CD4-positive, alpha-beta memory T cell (primary cell): ENCODE measurements at regions of chr1 and their contacts with region 1.

Region 1: GRCh38 chr1:236795035-236795756 is at the start of gene MTR:
- DNase-seq: peak; percentile 95 to 98 (median 95)
- H3K4me3 ChIP-seq: peak within 1 kb of the TSS; percentile 83 to 97
- H3K4me3 Mint-ChIP-seq: peak within 1 kb of the TSS; percentile 92 to 98 (median 96)
- H3K27ac ChIP-seq: peak within 1 kb of the TSS; percentile 99
- H3K27ac Mint-ChIP-seq: peak within 1 kb of the TSS; percentile 95 to 99 (median 98)
- H3K4me1 ChIP-seq: peaks cover 39% of the 10 kb centered on the region
- H3K4me1 Mint-ChIP-seq: peaks cover 25 to 49% (median 31%) of the 10 kb centered on the region in 4 donors
- H3K27me3 ChIP-seq: no peaks in the 10 kb centered on the region
- H3K27me3 Mint-ChIP-seq: peaks cover 1 to 5% of the 10 kb centered on the region in 2 donors
- total RNA-seq, gene MTR: 68.4 to 71.0 TPM

Region 2: GRCh38 chr1:236416165-236416564 is 379.0 kb before region 1 on chr1:
- CTCF ChIA-PET with region 1: no interaction called
- POLR2A ChIA-PET with region 1: no interaction called
- intact Hi-C with region 1: loop called (anchors 10 kb)
- DNase-seq: peak; percentile 73 to 86 (median 82)
- H3K4me3 ChIP-seq: peak overlapping the region; percentile 45 to 49
- H3K4me3 Mint-ChIP-seq: peak overlapping the region; percentile 63 to 89 (median 80)
- H3K27ac ChIP-seq: peak overlapping the region; percentile 83
- H3K27ac Mint-ChIP-seq: peak overlapping the region; percentile 88 to 99 (median 97)
- H3K4me1 ChIP-seq: peaks cover 25% of the 10 kb centered on the region
- H3K4me1 Mint-ChIP-seq: peaks cover 18 to 27% (median 25%) of the 10 kb centered on the region in 4 donors
- H3K27me3 ChIP-seq: no peaks in the 10 kb centered on the region
- H3K27me3 Mint-ChIP-seq: no peaks in the 10 kb centered on the region

Region 3: GRCh38 chr1:236523701-236524141 is 271.5 kb before region 1 on chr1 and contains the start of gene LGALS8:
- CTCF ChIA-PET with region 1: no interaction called
- POLR2A ChIA-PET with region 1: interaction called, 4 read pairs
- intact Hi-C with region 1: loop called (anchors 5 kb)
- DNase-seq: peak; percentile 80 to 88 (median 84)
- H3K4me3 ChIP-seq: peak within 1 kb of the TSS; percentile 87 to 96
- H3K4me3 Mint-ChIP-seq: peak within 1 kb of the TSS; percentile 94 to 100 (median 99)
- H3K27ac ChIP-seq: peak within 1 kb of the TSS; percentile 94
- H3K27ac Mint-ChIP-seq: peak within 1 kb of the TSS; percentile 91 to 99 (median 99)
- H3K4me1 ChIP-seq: peaks cover 22% of the 10 kb centered on the region
- H3K4me1 Mint-ChIP-seq: peaks cover 19 to 63% (median 35%) of the 10 kb centered on the region in 4 donors
- H3K27me3 ChIP-seq: no peaks in the 10 kb centered on the region
- H3K27me3 Mint-ChIP-seq: no peaks in the 10 kb centered on the region
- total RNA-seq, gene LGALS8: 193 to 196 TPM

Region 4: DNA sequence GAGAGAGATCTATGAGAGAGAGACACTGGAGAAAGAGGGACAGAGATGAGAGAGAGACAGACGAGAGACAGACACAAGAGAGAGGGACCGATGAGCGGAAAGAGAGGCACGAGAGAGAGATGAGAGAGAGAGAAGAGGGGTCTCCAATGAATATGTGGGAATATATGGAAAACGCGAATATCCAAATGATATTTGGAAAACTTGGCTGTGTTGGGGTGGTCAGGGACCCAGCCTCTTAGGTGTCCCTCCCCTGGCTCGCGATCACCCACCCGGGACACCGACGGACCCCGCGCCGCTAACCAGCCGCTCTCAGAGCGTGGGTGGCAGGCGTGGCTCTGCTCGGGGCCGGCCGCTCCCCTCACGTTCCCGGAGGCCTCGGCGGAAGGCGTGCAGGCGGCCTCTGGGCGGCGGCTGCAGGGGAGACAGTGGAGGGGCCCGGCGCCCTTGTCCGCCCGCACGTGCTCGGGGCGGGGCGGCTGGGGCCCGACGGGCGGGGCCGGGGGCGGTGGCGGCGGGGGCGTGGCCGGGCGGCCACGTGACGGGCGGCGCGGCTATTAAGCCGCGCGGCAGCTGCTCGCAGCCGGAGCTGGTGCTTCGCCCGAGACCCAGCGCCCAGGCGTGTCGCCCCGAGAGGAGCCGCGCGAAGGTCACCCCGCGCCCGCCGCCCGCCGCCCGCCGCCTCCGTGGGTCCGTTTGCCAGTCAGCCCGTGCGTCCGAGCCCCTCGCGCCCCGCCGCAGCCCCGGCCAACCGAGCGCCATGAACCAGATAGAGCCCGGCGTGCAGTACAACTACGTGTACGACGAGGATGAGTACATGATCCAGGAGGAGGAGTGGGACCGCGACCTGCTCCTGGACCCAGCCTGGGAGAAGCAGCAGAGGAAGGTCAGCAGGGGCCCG is 109.0 kb before region 1 on chr1 and contains the start of gene ACTN2:
- CTCF ChIA-PET with region 1: no interaction called
- POLR2A ChIA-PET with region 1: no interaction called
- intact Hi-C with region 1: loop called (anchors 10 kb)
- DNase-seq: peak; percentile 28 to 43 (median 36)
- H3K4me3 ChIP-seq: peak within 1 kb of the TSS; percentile 11 to 38
- H3K4me3 Mint-ChIP-seq: peak within 1 kb of the TSS; percentile 71 to 88 (median 80)
- H3K27ac ChIP-seq: no peak within 1 kb of the TSS
- H3K27ac Mint-ChIP-seq: peak within 1 kb of the TSS in 6 of 7 donors; percentile 12 to 90 (median 42)
- H3K4me1 ChIP-seq: peaks cover 11% of the 10 kb centered on the region
- H3K4me1 Mint-ChIP-seq: peaks cover 13 to 23% (median 18%) of the 10 kb centered on the region in 4 donors
- H3K27me3 ChIP-seq: peaks cover 5% of the 10 kb centered on the region
- H3K27me3 Mint-ChIP-seq: peaks cover 11 to 16% of the 10 kb centered on the region in 2 donors
- total RNA-seq, gene ACTN2: not detected

Region 5: DNA sequence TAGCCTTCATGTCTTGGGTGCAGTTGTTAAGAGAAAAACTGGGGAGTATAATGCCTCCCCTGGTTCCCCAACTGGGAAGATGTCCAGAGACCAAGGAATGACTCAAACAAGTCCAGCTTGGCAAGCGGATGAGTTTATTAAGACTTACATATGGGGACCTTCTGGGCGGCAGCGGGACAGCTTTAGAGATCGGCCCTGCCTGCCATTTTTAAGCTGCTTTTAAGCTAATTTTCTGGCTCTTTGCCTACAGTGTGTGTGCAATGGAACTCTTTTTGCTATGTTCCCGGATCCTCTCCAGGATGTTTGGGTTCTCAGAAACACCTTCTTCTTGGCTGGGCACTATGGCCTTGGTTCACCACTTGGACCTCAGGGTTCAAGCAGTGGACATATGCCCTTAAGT is 346.3 kb after region 1 on chr1:
- CTCF ChIA-PET with region 1: no interaction called
- POLR2A ChIA-PET with region 1: no interaction called
- intact Hi-C with region 1: no loop called
- DNase-seq: no peak
- H3K4me3 ChIP-seq: no peak overlapping the region
- H3K4me3 Mint-ChIP-seq: no peak overlapping the region
- H3K27ac ChIP-seq: no peak overlapping the region
- H3K27ac Mint-ChIP-seq: no peak overlapping the region
- H3K4me1 ChIP-seq: no peaks in the 10 kb centered on the region
- H3K4me1 Mint-ChIP-seq: no peaks in the 10 kb centered on the region
- H3K27me3 ChIP-seq: no peaks in the 10 kb centered on the region
- H3K27me3 Mint-ChIP-seq: peaks cover 0 to 5% of the 10 kb centered on the region in 2 donors